ENCODE measurements at regions of chr14 and their contacts with region 1.

Region 1: DNA sequence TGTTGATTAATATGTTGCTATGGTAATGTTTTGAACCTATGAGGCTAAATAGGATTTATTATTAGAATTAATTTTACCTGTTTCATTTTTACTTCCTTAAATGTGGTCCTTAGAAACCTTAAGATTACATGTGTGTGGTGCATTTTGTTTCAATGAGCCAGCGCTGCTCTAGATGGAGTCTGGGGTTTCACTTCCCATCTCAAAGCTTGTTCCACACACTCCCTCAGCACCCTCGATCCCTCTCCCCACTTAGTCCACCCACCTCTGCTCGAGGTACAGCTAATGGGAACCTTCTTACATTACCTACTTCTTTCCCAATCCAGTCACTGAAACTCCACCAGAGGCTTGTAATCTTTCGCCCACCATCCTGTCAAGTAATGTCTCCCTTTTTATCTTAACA is 205.2 kb downstream of the PAX9 start:
- DNase-seq: no peak
- ATAC-seq: no peak
- H3K4me3 ChIP-seq: no peak overlapping the region
- H3K4me3 Mint-ChIP-seq: no peak overlapping the region
- H3K27ac ChIP-seq: no peak overlapping the region
- H3K27ac Mint-ChIP-seq: no peak overlapping the region
- H3K4me1 ChIP-seq: no peaks in the 10 kb centered on the region
- H3K4me1 Mint-ChIP-seq: no peaks in the 10 kb centered on the region
- H3K27me3 ChIP-seq: peaks cover 0 to 2% of the 10 kb centered on the region in 2 experiments
- H3K27me3 Mint-ChIP-seq: no peaks in the 10 kb centered on the region

Region 2: DNA sequence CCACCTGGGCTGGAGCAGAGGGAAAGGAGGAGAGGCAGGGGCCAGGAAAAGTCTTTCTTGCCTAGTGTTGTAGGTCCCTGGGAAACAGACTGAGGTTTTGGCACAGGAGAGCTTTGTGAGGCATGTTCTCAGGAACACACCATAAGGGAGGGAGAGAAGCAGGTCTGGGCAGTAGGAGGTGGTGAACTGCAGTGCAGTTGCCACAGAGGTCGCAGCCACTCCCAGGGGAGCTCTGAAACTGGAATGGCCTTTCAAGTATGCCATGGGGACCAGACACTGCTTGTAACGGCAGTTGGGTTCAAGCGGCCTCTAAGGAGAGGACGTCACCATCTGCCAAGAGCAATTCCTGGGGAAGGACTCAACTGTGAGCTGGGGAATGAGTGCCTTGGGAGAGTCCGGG is 249.0 kb before region 1 on chr14:
- CTCF ChIA-PET with region 1: no interaction called
- POLR2A ChIA-PET with region 1: interaction called in 1 of 2 experiments, 10 read pairs
- DNase-seq: no peak
- ATAC-seq: no peak
- H3K4me3 ChIP-seq: no peak overlapping the region
- H3K4me3 Mint-ChIP-seq: no peak overlapping the region
- H3K27ac ChIP-seq: no peak overlapping the region
- H3K27ac Mint-ChIP-seq: no peak overlapping the region
- H3K4me1 ChIP-seq: no peaks in the 10 kb centered on the region
- H3K4me1 Mint-ChIP-seq: no peaks in the 10 kb centered on the region
- H3K27me3 ChIP-seq: peaks cover 0 to 2% of the 10 kb centered on the region in 2 experiments
- H3K27me3 Mint-ChIP-seq: peaks cover 0 to 3% of the 10 kb centered on the region in 2 donors

Region 3: DNA sequence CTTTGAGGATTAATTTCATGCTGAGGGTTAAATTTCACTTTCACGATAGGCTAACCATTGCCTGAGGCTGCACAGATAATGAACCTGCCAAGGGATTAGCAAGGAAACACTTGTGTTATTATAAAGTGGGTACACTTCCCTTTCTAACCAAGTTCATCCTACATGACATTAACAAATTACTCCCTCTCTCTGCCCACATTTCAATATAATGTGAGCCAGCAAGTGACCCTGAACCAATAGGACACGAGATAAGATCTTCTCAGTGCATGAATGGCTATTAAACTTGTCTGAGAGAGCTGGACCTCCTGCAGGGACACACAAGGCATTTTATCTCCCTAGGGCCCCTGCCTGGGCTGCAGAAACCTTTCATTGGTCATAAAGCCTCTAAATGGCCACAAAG is 31.7 kb before region 1 on chr14:
- CTCF ChIA-PET with region 1: no interaction called
- POLR2A ChIA-PET with region 1: no interaction called
- DNase-seq: no peak
- ATAC-seq: no peak
- H3K4me3 ChIP-seq: no peak overlapping the region
- H3K4me3 Mint-ChIP-seq: no peak overlapping the region
- H3K27ac ChIP-seq: no peak overlapping the region
- H3K27ac Mint-ChIP-seq: no peak overlapping the region
- H3K4me1 ChIP-seq: no peaks in the 10 kb centered on the region
- H3K4me1 Mint-ChIP-seq: no peaks in the 10 kb centered on the region
- H3K27me3 ChIP-seq: no peaks in the 10 kb centered on the region
- H3K27me3 Mint-ChIP-seq: no peaks in the 10 kb centered on the region

Region 4: DNA sequence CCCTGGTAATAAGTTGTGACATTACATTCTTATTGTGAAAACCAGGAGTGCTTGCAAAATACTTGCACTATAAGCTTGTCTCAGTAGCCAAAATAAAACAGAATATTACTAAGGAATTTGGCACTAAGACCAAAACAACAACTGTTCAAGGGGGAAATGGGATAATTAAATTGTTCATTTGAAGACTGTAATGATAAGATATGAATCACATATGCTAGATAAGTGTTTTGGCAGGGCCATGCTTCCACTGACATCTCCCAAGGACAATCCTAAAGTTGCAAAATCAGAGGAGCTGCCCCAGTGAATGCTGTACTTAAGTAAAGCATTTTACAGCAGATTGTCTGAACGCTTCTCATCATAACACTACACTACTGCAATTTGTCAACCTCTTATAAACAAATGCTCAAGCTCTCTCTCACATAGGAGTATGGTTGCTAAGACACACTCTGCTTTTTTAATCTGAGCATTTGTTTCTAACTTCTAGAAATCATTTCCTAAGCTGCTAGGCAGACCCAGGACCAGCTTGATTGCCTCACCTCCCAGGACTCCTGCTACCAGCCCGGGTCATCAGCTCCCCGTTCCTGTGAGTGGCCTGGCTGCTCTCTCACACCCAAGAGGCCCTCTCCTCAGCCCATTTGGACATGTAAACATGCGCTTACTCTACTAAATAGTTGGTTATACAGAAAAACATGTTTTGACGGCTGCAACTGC is 13.7 kb before region 1 on chr14:
- CTCF ChIA-PET with region 1: no interaction called
- POLR2A ChIA-PET with region 1: no interaction called
- DNase-seq: no peak
- ATAC-seq: no peak
- H3K4me3 ChIP-seq: no peak overlapping the region
- H3K4me3 Mint-ChIP-seq: no peak overlapping the region
- H3K27ac ChIP-seq: no peak overlapping the region
- H3K27ac Mint-ChIP-seq: no peak overlapping the region
- H3K4me1 ChIP-seq: no peaks in the 10 kb centered on the region
- H3K4me1 Mint-ChIP-seq: no peaks in the 10 kb centered on the region
- H3K27me3 ChIP-seq: no peaks in the 10 kb centered on the region
- H3K27me3 Mint-ChIP-seq: peaks cover 0 to 6% of the 10 kb centered on the region in 2 donors